Mammary epithelial cell (primary cell): ENCODE measurements at regions of chr5 and their contacts with region 1.

Region 1: GRCh38 chr5:150948527-150948926 is 43.7 kb upstream of the ZNF300 start:
- DNase-seq: no peak
- H3K4me3 ChIP-seq: no peak overlapping the region
- H3K27ac ChIP-seq: no peak overlapping the region
- H3K4me1 ChIP-seq: no peaks in the 10 kb centered on the region
- H3K27me3 ChIP-seq: no peaks in the 10 kb centered on the region
- CTCF ChIP-seq: no peak

Region 2: DNA sequence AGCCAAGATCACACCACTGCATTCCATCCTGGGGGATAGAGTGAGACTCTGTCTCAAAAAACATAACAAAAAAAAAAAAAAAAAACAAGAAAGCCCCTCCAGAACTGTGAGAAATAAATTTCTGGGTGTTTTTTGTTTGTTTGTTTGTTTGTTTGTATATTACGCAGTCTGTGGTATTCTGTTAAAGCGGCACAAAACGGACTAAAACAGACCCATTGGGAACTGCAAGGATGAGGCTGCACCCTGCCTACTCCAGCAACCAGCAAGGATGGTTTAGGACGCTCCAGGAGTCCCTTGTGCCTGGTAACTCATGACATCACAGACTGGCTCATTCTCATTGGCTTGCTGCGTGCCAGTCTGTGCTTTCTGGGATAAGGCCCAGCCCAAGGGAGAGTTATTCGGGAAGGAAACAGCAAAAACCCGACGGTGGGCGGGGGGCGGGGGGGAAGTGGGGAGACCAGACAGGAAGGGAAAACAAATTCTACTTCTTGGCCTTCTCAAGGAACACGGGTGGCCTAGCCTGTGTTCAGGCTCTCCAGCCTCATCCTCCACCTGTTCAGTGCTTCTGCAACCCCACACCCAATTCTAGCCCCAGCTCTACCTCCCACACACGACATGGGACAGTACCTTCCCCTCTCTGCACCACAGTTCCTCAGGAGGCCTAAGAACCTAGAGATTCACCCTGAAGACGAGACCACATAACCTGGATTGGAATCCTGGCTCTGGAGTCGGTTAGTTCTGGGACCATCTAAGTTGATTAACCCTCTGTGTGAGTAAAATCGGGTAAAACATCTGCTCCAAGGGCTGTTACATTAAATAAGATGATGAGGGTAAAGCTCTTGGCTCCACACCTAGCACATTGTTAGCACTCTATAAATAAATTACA is 538.6 kb before region 1 on chr5:
- CTCF ChIA-PET with region 1: no interaction called
- dilution Hi-C with region 1: no loop called
- in situ Hi-C with region 1: no loop called
- intact Hi-C with region 1: no loop called
- DNase-seq: peak; percentile 80
- H3K4me3 ChIP-seq: no peak overlapping the region
- H3K27ac ChIP-seq: no peak overlapping the region
- H3K4me1 ChIP-seq: no peaks in the 10 kb centered on the region
- H3K27me3 ChIP-seq: no peaks in the 10 kb centered on the region
- CTCF ChIP-seq: no peak

Region 3: GRCh38 chr5:150895431-150896428 is 52.8 kb before region 1 on chr5:
- CTCF ChIA-PET with region 1: no interaction called
- dilution Hi-C with region 1: no loop called
- in situ Hi-C with region 1: no loop called
- intact Hi-C with region 1: no loop called
- DNase-seq: no peak
- H3K4me3 ChIP-seq: no peak overlapping the region
- H3K27ac ChIP-seq: no peak overlapping the region
- H3K4me1 ChIP-seq: no peaks in the 10 kb centered on the region
- H3K27me3 ChIP-seq: no peaks in the 10 kb centered on the region
- CTCF ChIP-seq: no peak

Region 4: DNA sequence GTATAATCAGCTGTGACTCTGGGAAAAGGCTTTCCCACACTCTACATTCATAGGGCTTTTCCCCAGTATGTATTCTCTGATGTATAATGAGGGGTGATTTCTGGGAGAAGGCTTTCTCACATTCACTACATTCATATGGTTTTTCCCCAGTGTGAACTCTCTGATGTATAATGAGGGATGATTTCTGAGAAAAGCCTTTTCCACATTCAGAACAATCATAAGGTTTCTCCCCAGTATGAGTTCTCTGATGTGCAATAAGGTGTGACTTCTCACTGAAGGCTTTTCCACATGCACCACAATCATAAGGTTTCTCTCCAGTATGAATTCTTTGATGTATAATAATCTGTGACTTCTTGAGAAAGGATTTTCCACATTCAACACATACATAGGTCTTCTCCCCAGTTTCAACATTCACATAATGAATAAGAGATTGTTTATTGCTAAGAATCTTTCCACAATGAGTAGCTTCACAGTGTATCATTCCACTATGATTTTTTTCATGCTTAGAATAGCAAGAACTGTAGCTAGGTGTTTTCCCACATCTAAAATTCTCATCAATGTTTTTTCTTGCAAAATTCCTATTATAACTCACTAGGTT is 17.1 kb before region 1 on chr5:
- CTCF ChIA-PET with region 1: no interaction called
- dilution Hi-C with region 1: no loop called
- in situ Hi-C with region 1: no loop called
- intact Hi-C with region 1: no loop called
- DNase-seq: no peak
- H3K4me3 ChIP-seq: no peak overlapping the region
- H3K27ac ChIP-seq: no peak overlapping the region
- H3K4me1 ChIP-seq: no peaks in the 10 kb centered on the region
- H3K27me3 ChIP-seq: no peaks in the 10 kb centered on the region
- CTCF ChIP-seq: no peak

Region 5: DNA sequence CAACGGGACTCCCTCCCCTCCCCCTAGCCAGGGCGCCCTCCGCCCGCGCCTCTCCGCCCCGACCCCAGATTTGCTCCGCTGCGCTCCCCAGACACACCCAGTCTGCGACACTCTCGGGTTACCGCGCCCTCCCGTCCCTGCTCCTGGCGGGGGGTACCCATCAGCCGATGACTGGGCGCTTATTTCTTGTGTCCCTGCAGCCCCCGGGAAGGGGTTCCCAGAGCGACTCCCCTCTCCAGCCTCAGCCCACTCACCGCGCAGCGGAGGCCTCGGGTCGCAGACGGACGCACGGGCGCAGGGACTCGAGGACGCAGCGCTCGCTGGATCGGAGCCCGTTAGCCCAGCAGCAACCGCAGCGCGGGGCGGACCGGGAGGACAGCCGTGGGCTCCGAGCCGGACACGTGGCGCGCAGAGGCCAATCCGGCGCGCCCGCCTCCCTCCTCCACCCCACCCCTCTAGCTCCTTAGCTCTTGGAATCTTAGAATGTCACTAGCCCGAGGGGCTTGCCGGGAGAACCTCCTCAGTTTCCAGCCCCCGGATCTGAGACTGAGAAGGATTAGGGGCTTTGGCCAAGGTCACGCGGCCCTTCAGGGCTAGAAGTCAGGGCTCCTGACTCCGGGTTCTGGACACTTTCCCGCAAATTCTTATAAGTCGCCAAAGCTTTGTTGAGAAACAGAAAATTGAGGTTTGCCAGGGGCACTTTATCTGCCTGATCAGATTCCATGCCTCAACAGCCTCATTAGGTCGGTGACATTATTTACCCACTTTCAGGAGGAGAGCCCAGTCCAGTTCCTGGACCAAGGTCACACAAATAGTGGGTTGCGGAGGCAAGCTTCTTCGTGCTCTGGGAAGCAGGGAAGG is 209.1 kb after region 1 on chr5 and contains the start of gene ANXA6:
- CTCF ChIA-PET with region 1: no interaction called
- dilution Hi-C with region 1: no loop called
- in situ Hi-C with region 1: no loop called
- intact Hi-C with region 1: no loop called
- DNase-seq: peak; percentile 59
- H3K4me3 ChIP-seq: peak within 1 kb of the TSS; percentile 36 to 63 (median 61)
- H3K27ac ChIP-seq: no peak within 1 kb of the TSS
- H3K4me1 ChIP-seq: peaks cover 16% of the 10 kb centered on the region
- H3K27me3 ChIP-seq: no peaks in the 10 kb centered on the region
- CTCF ChIP-seq: no peak
- total RNA-seq, gene ANXA6: 9.6 to 32.5 TPM

Region 6: GRCh38 chr5:151219113-151219512 is 270.6 kb after region 1 on chr5:
- CTCF ChIA-PET with region 1: interaction called, 11 read pairs
- dilution Hi-C with region 1: no loop called
- in situ Hi-C with region 1: no loop called
- intact Hi-C with region 1: no loop called
- DNase-seq: no peak
- H3K4me3 ChIP-seq: no peak overlapping the region
- H3K27ac ChIP-seq: no peak overlapping the region
- H3K4me1 ChIP-seq: no peaks in the 10 kb centered on the region
- H3K27me3 ChIP-seq: no peaks in the 10 kb centered on the region
- CTCF ChIP-seq: no peak